SK-N-SH (cell line): ENCODE measurements at regions of chr15 and their contacts with region 1.

Region 1: DNA sequence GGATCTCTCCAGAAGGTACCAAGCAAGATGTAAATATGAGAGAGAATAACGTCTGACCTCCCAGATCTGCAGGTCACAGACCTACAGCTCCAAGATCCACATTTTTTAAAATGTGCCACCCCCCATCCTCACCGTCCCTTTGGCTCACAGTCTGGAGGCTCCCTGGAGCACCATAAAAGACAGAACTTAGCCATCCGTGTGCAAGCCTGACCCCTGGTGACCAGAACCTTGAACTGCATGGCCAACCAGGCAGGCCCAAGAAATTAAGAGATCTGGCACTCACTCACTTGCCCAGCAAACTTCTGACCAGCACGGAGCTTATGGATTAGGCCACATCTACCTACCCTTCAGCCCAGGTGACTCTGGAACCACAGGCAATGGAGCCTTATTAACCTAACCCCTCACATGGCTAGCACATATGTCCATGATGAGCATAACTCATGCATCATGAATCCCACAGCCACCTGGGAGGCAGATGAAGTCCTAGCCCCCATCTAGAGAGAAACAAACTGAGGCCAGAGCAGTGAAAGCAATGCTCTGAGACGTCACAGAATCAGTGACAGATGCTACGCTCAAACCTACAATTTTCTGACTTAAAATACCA is 275.3 kb downstream of the UACA start:
- DNase-seq: peak; percentile 84
- H3K4me3 ChIP-seq: no peak overlapping the region; a peak in 1 of 4 replicates
- H3K27ac ChIP-seq: peak overlapping the region in 1 of 2 experiments; percentile 39; a peak in 1 of 4 replicates
- H3K4me1 ChIP-seq: peaks cover 15 to 24% of the 10 kb centered on the region in 2 experiments; a peak in 3 of 4 replicates
- H3K27me3 ChIP-seq: no peaks in the 10 kb centered on the region
- CTCF ChIP-seq: peak; percentile 95
- EP300 ChIP-seq: no peak; a peak in 1 of 4 replicates
- RAD21 ChIP-seq: peak; percentile 97

Region 2: GRCh38 chr15:70437882-70438331 is 50.2 kb before region 1 on chr15:
- CTCF ChIA-PET with region 1: interaction called, 18 read pairs
- POLR2A ChIA-PET with region 1: no interaction called
- DNase-seq: peak; percentile 65
- H3K4me3 ChIP-seq: no peak overlapping the region
- H3K27ac ChIP-seq: no peak overlapping the region; a peak in 1 of 4 replicates
- H3K4me1 ChIP-seq: peaks cover 0 to 44% of the 10 kb centered on the region in 2 experiments; a peak in 2 of 4 replicates
- H3K27me3 ChIP-seq: peaks cover 4% of the 10 kb centered on the region; the same call in 1 of the 2 replicates
- CTCF ChIP-seq: no peak
- EP300 ChIP-seq: peak in 1 of 2 experiments; percentile 32; a peak in 1 of 4 replicates
- RAD21 ChIP-seq: no peak

Region 3: GRCh38 chr15:70504299-70504951 is 16.3 kb after region 1 on chr15:
- CTCF ChIA-PET with region 1: interaction called, 33 read pairs
- POLR2A ChIA-PET with region 1: no interaction called
- DNase-seq: peak; percentile 62
- H3K4me3 ChIP-seq: no peak overlapping the region
- H3K27ac ChIP-seq: peak overlapping the region in 1 of 2 experiments; percentile 56; a peak in 2 of 4 replicates
- H3K4me1 ChIP-seq: peaks cover 46% of the 10 kb centered on the region in 2 experiments; a peak in 3 of 4 replicates
- H3K27me3 ChIP-seq: no peaks in the 10 kb centered on the region
- CTCF ChIP-seq: no peak
- EP300 ChIP-seq: peak in 1 of 2 experiments; percentile 17; a peak in 1 of 4 replicates
- RAD21 ChIP-seq: no peak

Region 4: GRCh38 chr15:70569091-70569621 is 81.1 kb after region 1 on chr15:
- CTCF ChIA-PET with region 1: no interaction called
- POLR2A ChIA-PET with region 1: no interaction called
- DNase-seq: peak; percentile 44
- H3K4me3 ChIP-seq: no peak overlapping the region
- H3K27ac ChIP-seq: no peak overlapping the region
- H3K4me1 ChIP-seq: no peaks in the 10 kb centered on the region
- H3K27me3 ChIP-seq: no peaks in the 10 kb centered on the region
- CTCF ChIP-seq: peak; percentile 63
- EP300 ChIP-seq: no peak
- RAD21 ChIP-seq: peak; percentile 77

Region 5: DNA sequence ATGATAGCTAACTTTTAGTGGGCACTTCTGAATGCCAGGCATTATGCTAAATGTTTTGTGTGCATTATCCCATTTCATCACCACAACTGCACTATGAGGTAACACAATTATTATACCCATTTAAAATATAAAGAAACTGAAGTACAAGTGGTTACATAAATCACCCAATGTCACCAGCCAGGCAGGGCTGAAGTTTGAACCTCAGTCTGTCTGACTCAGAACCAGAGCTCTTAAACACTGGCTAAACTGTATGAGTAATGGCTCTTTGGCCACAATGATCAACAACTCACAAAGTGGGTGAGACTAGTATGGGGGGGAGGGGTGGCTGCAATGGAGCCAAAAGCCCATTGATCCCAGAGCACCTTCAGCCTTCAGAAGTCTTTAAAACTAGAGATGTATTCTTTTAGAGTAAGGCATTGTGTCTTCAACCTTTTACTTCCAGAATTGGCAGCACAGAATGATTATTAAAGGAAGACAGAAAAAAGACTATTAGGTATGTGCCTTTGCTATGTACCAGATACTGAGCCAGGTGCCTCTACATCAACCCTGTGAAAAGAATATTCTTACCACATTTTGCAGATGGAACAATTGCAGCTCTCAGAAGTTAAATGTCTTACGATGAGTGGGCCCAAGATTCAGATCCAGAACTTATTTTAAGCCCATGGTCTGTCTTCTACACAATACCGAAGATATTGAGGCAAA is 108.4 kb after region 1 on chr15:
- CTCF ChIA-PET with region 1: no interaction called
- POLR2A ChIA-PET with region 1: no interaction called
- DNase-seq: no peak
- H3K4me3 ChIP-seq: no peak overlapping the region
- H3K27ac ChIP-seq: no peak overlapping the region
- H3K4me1 ChIP-seq: no peaks in the 10 kb centered on the region; a peak in 1 of 4 replicates
- H3K27me3 ChIP-seq: no peaks in the 10 kb centered on the region
- CTCF ChIP-seq: no peak
- EP300 ChIP-seq: peak in 1 of 2 experiments; percentile 64; a peak in 2 of 4 replicates
- RAD21 ChIP-seq: no peak

Region 6: DNA sequence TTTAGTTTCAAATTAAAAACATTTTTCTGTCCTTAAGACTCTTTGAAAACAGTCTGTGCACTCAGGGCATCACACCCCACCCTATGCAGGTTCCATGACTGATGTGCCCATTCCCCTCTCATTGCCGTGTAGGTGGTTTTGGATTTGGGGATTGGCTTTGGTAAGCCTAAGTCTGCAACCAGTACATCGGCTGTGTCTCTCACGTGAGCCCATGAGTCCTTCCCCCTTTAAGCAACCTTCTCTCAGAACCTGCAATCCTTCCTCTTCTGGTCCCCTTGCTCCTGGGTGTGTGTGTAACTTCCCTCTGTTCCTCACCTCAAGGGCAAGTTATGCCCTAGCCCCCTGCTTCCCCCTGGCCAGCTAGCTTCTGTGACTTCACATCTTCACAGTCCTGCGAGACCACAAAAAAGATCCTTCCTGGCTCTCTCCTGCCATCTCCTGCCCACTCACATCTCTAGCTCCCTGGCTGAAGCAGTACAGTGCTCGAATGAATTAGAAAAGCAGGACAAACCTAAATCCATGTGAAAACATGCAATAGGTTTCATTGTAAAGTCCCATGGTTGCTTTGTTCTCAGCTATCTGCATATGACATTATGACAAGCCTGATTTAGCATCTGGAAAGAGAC is 148.5 kb after region 1 on chr15:
- CTCF ChIA-PET with region 1: interaction called, 10 read pairs
- POLR2A ChIA-PET with region 1: no interaction called
- DNase-seq: peak; percentile 46
- H3K4me3 ChIP-seq: no peak overlapping the region
- H3K27ac ChIP-seq: no peak overlapping the region
- H3K4me1 ChIP-seq: peaks cover 0 to 8% of the 10 kb centered on the region in 2 experiments; a peak in 1 of 4 replicates
- H3K27me3 ChIP-seq: no peaks in the 10 kb centered on the region
- CTCF ChIP-seq: peak; percentile 49
- EP300 ChIP-seq: no peak
- RAD21 ChIP-seq: peak; percentile 83

Region 7: GRCh38 chr15:70892002-70892914 is 404.2 kb after region 1 on chr15 and contains the starts of genes LRRC49 and THAP10:
- CTCF ChIA-PET with region 1: no interaction called
- POLR2A ChIA-PET with region 1: no interaction called
- DNase-seq: peak; percentile 88
- H3K4me3 ChIP-seq: peak within 1 kb of the TSS; percentile 82 to 98
- H3K27ac ChIP-seq: peak within 1 kb of the TSS; percentile 91 to 99
- H3K4me1 ChIP-seq: peaks cover 6 to 13% of the 10 kb centered on the region in 2 experiments; a peak in 3 of 4 replicates
- H3K27me3 ChIP-seq: no peaks in the 10 kb centered on the region
- CTCF ChIP-seq: no peak
- EP300 ChIP-seq: peak in 1 of 2 experiments; percentile 10; a peak in 1 of 4 replicates
- RAD21 ChIP-seq: no peak
- polyA plus RNA-seq, gene LRRC49: 7.2 and 10.4 TPM in 2 replicates
- polyA plus RNA-seq, gene THAP10: 2.9 and 3.2 TPM in 2 replicates